ENCODE measurements at regions of chr20 and their contacts with region 1.

Region 1: GRCh38 chr20:35619196-35620095 is 3.8 kb downstream of the SPAG4 start:
- DNase-seq: peak; percentile 93
- ATAC-seq: peak; percentile 51
- H3K4me3 Mint-ChIP-seq: peak overlapping the region; percentile 83
- H3K27ac Mint-ChIP-seq: peak overlapping the region; percentile 92
- H3K4me1 Mint-ChIP-seq: peaks cover 48% of the 10 kb centered on the region
- H3K27me3 Mint-ChIP-seq: peaks cover 2% of the 10 kb centered on the region

Region 2: DNA sequence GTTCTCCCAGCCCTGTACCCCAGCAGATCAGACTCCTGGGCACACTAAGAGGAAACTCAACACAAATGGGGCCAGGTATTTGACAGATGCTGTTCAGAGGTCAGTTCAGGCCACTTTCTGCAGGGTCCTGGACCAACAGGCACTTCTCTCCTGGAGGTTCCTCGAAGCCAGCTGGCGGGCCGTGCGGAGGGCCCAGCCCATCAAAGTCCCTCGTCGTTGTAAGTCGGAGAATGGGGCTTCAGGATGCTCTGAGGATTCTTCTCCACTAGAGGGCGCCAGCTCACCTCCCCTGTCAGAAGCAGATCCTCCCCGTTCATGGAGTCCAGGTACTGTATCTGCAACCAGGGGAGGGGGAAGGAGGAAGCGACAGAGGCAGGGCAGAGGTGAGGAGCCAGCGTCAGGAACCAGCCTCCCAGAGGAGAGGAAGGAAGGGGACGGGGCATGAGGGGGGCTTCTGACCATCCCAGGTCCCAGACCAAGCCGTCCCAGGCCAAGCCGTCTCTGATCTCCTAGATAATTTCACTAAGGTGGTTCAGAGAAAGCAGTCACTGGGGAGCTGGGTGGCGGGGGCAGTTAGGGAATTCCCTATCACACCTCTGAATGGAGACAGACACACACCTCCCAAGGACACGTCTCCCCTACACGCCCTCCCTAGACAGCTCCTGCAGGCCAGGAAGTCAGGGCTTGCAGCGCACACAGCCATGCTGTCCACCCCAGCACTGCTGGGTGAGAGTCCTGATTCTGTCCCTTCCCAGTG is 315.5 kb before region 1 on chr20:
- CTCF ChIA-PET with region 1: interaction called, 3 read pairs
- POLR2A ChIA-PET with region 1: no interaction called
- intact Hi-C with region 1: loop called in 1 of 2 experiments (anchors 5 kb)
- DNase-seq: peak; percentile 92
- ATAC-seq: peak; percentile 57
- H3K4me3 Mint-ChIP-seq: no peak overlapping the region
- H3K27ac Mint-ChIP-seq: peak overlapping the region; percentile 93
- H3K4me1 Mint-ChIP-seq: peaks cover 59% of the 10 kb centered on the region
- H3K27me3 Mint-ChIP-seq: no peaks in the 10 kb centered on the region

Region 3: DNA sequence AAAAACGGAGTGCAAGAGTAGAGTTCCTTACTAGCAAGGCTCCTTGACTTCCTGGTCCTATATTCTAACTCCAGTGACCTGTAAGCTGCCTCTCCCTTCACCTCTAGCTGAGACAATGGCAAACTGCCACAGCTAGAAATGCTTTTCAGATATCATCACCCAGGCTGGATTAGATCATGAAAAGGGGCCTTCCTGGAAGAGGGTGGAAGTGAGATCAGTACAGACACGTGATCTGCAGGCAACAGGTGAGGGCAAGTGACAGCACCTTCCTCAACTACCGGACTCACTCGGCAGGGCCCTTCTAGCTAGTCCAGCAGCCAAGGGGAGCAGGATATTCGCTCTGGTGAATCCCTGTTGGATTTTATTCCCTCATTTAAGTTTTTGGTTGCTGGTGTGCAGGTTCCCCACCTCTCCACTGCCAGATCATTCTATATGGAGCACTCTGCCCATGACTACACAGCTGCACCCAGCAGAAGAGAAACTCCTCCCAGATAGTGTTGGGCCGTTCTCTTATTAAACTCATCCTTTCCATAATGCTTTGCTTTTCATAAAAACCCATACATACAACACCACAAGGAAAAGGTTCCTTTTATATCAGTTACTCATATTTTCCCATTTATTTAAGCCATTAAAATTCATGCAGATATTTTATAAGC is 300.8 kb before region 1 on chr20:
- CTCF ChIA-PET with region 1: no interaction called
- POLR2A ChIA-PET with region 1: no interaction called
- intact Hi-C with region 1: no loop called
- DNase-seq: no peak
- ATAC-seq: peak; percentile 42
- H3K4me3 Mint-ChIP-seq: no peak overlapping the region
- H3K27ac Mint-ChIP-seq: peak overlapping the region; percentile 8
- H3K4me1 Mint-ChIP-seq: peaks cover 45% of the 10 kb centered on the region
- H3K27me3 Mint-ChIP-seq: no peaks in the 10 kb centered on the region

Region 4: DNA sequence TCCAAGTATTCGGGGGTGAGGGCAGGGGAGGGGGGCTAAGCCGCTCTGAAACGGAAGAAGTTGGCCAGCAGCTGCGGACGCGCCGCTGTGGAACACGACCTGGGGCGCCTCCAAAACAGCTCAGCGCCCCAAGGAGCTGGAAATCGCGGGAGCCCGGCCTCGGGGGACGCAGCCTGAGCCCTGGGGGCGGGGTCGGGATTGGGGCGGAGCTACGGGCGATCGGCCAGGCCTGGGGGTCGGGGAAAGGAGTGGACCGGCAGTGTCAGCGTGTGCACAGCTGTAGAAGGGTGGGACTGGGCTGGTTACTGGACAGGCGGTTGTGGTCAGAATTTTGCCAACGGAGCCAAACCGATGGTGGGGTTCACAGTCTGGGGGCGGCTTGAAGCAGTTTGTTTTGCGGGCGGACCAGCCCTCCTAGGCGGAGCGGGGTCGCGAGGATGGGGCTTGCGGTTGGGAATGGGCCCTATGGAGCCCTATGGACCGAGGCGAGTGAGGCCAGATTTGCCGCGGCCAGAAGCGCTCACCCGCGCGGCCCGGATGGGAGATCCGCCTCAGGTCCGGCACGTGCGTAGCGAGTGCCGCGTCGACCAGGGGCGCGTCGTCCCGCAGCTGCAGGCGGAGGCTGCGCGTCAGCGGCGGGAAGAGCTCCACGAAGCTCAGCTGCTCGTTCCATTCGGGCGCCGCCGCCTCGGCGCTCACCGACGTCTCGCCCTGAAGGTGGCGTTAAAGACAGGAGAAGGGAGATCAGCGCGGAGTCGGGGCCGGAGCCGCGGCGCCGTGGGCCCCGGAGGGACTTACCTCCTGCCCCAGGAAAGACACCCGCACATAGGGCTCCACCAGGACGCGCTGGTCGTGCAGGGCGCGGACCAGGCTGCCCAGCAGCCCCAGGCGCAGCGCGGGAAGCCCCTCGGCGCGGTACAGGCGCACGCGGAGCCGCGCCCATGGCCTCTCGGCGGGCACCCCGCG is 18.2 kb before region 1 on chr20:
- CTCF ChIA-PET with region 1: interaction called, 5 read pairs
- POLR2A ChIA-PET with region 1: interaction called, 8 read pairs
- intact Hi-C with region 1: loop called (anchors 1 kb)
- DNase-seq: peak; percentile 91
- ATAC-seq: peak; percentile 94
- H3K4me3 Mint-ChIP-seq: peak overlapping the region; percentile 58
- H3K27ac Mint-ChIP-seq: peak overlapping the region; percentile 49
- H3K4me1 Mint-ChIP-seq: peaks cover 5% of the 10 kb centered on the region
- H3K27me3 Mint-ChIP-seq: peaks cover 23% of the 10 kb centered on the region

Region 5: GRCh38 chr20:35664544-35665221 is 45.2 kb after region 1 on chr20 and contains the starts of genes CPNE1 and RBM12:
- CTCF ChIA-PET with region 1: interaction called, 92 read pairs
- POLR2A ChIA-PET with region 1: interaction called, 55 read pairs
- intact Hi-C with region 1: loop called (anchors 1 kb)
- DNase-seq: peak; percentile 96
- ATAC-seq: peak; percentile 68
- H3K4me3 Mint-ChIP-seq: peak within 1 kb of the TSS; percentile 80
- H3K27ac Mint-ChIP-seq: peak within 1 kb of the TSS; percentile 100
- H3K4me1 Mint-ChIP-seq: peaks cover 36% of the 10 kb centered on the region
- H3K27me3 Mint-ChIP-seq: no peaks in the 10 kb centered on the region
- total RNA-seq, gene CPNE1: 249 to 258 TPM
- total RNA-seq, gene RBM12: 122 to 148 TPM

Region 6: GRCh38 chr20:35771689-35772562 is 152.5 kb after region 1 on chr20 and contains the start of gene PHF20:
- CTCF ChIA-PET with region 1: interaction called, 4 read pairs
- POLR2A ChIA-PET with region 1: interaction called, 4 read pairs
- intact Hi-C with region 1: loop called in 1 of 2 experiments (anchors 1 kb)
- DNase-seq: peak; percentile 100
- ATAC-seq: peak; percentile 91
- H3K4me3 Mint-ChIP-seq: peak within 1 kb of the TSS; percentile 81
- H3K27ac Mint-ChIP-seq: peak within 1 kb of the TSS; percentile 94
- H3K4me1 Mint-ChIP-seq: peaks cover 76% of the 10 kb centered on the region
- H3K27me3 Mint-ChIP-seq: no peaks in the 10 kb centered on the region
- total RNA-seq, gene PHF20: 54.3 to 61.6 TPM

Region 7: DNA sequence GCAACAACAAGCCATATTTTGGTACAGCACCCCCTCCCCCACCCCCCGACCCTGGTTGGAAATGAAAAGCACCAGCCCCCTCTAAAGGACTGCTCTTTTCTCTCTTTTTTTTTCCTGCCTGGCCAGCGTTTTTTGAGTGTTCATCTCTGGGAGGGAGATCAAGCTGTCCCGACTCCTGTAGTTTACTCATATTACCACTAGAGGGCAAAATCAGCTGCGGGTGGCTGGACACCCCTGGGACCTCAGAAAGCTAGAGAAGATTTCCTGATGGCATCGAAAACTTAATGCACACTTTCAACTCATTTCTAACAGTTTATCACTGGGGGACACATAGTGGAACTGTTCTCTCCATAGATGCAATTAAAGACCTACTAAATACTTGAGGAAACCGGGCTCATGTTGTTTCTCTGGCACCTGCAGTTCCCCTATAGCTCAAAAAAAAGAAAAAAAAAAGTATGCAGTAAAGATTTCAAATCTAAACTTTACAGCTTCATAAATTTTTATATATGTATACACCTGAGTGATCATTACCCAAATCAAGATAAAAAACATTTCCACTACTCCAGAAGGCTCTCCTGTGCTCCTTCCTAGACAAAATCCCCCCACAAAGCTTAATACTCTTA is 373.4 kb after region 1 on chr20:
- CTCF ChIA-PET with region 1: no interaction called
- POLR2A ChIA-PET with region 1: no interaction called
- intact Hi-C with region 1: no loop called
- DNase-seq: peak; percentile 61
- ATAC-seq: peak; percentile 85
- H3K4me3 Mint-ChIP-seq: no peak overlapping the region
- H3K27ac Mint-ChIP-seq: no peak overlapping the region
- H3K4me1 Mint-ChIP-seq: peaks cover 4% of the 10 kb centered on the region
- H3K27me3 Mint-ChIP-seq: peaks cover 3% of the 10 kb centered on the region

Region 8: GRCh38 chr20:36951198-36951976 is 1331.9 kb after region 1 on chr20 and contains the start of gene SAMHD1:
- CTCF ChIA-PET with region 1: no interaction called
- POLR2A ChIA-PET with region 1: no interaction called
- intact Hi-C with region 1: loop called in 1 of 2 experiments (anchors 2 kb)
- DNase-seq: peak; percentile 94
- ATAC-seq: peak; percentile 95
- H3K4me3 Mint-ChIP-seq: peak within 1 kb of the TSS; percentile 92
- H3K27ac Mint-ChIP-seq: peak within 1 kb of the TSS; percentile 94
- H3K4me1 Mint-ChIP-seq: peaks cover 49% of the 10 kb centered on the region
- H3K27me3 Mint-ChIP-seq: no peaks in the 10 kb centered on the region
- total RNA-seq, gene SAMHD1: 35.6 to 36.9 TPM